ENCODE measurements at regions of chr6 and their contacts with region 1.

Region 1: DNA sequence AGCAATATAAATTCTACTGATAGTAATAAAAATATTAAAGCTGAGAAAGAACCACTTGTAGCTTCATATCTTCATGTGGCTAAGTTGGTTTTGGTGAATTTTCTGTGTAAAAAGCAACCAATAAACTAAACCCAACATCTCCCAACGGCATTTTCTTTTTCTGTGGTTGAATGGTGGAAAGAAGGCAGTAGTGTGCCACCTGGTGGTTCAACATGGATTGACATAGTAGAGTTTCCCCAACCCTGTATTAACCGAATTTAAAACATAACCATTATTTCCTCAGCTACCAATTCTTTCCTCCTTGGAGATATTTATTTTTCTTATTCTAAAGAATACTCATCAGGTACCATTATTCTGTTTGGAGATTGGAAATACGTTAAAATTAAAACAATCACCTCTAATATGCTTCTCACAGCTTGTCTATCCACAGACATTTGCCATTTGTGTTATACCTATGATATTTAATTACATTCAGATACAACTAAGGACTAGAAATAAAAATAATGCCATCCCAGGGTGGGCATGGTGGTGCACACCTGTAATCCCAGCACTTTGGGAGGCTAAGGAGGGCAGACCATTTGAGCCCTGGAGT is 117.1 kb upstream of the EEF1E1 start:
- DNase-seq: peak; percentile 27
- H3K4me3 ChIP-seq: no peak overlapping the region
- H3K27ac ChIP-seq: no peak overlapping the region
- H3K27me3 ChIP-seq: no peaks in the 10 kb centered on the region
- CTCF ChIP-seq: peak; percentile 84

Region 2: DNA sequence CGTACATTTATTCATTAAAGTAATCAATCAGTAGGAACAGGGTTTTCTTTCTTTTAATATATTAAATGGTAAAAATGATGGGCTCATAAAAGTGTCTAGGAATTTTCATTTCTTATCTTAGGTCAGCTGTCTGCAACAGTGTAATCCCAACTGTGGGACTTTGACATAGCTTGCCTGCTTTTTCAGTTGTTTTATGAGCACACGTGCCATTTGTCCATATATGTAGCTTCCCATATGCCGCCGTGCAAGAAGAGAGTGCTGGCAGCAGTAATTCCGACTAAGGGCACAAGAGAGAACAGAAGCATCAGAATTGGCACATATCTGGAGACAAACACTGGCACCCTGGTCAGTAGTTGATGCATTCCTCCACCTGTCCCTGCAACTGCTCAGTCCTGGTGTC is 96.2 kb before region 1 on chr6:
- CTCF ChIA-PET with region 1: interaction called, 945 read pairs
- POLR2A ChIA-PET with region 1: no interaction called
- DNase-seq: no peak
- H3K4me3 ChIP-seq: no peak overlapping the region
- H3K27ac ChIP-seq: no peak overlapping the region
- H3K27me3 ChIP-seq: no peaks in the 10 kb centered on the region
- CTCF ChIP-seq: no peak

Region 3: DNA sequence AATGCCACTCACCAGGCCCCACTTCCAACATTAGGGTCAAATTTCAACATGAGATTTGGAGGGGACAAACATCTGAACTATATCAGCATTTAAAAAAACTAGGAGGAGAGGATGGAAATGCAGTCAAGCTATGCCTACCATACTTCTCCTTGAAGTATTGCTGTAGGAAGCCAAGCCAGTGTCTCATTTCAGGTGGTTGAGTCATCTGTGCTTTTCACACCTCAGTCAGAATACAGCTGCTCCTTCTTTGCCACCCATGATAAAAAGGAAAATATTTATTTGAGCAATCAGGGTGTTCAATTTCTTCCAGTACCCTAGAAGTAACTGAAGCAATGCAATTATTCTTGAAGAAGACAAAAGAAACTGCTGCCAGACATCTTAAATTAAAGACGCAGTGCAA is 70.1 kb before region 1 on chr6:
- CTCF ChIA-PET with region 1: interaction called, 15 read pairs
- POLR2A ChIA-PET with region 1: no interaction called
- DNase-seq: no peak
- H3K4me3 ChIP-seq: no peak overlapping the region
- H3K27ac ChIP-seq: no peak overlapping the region
- H3K27me3 ChIP-seq: peaks cover 2% of the 10 kb centered on the region
- CTCF ChIP-seq: no peak

Region 4: GRCh38 chr6:8180327-8181159 is 38.9 kb before region 1 on chr6:
- CTCF ChIA-PET with region 1: interaction called, 71 read pairs
- POLR2A ChIA-PET with region 1: no interaction called
- DNase-seq: peak; percentile 55
- H3K4me3 ChIP-seq: no peak overlapping the region; the same call in 1 of the 2 replicates
- H3K27ac ChIP-seq: peak overlapping the region; percentile 59
- H3K27me3 ChIP-seq: no peaks in the 10 kb centered on the region
- CTCF ChIP-seq: no peak

Region 5: DNA sequence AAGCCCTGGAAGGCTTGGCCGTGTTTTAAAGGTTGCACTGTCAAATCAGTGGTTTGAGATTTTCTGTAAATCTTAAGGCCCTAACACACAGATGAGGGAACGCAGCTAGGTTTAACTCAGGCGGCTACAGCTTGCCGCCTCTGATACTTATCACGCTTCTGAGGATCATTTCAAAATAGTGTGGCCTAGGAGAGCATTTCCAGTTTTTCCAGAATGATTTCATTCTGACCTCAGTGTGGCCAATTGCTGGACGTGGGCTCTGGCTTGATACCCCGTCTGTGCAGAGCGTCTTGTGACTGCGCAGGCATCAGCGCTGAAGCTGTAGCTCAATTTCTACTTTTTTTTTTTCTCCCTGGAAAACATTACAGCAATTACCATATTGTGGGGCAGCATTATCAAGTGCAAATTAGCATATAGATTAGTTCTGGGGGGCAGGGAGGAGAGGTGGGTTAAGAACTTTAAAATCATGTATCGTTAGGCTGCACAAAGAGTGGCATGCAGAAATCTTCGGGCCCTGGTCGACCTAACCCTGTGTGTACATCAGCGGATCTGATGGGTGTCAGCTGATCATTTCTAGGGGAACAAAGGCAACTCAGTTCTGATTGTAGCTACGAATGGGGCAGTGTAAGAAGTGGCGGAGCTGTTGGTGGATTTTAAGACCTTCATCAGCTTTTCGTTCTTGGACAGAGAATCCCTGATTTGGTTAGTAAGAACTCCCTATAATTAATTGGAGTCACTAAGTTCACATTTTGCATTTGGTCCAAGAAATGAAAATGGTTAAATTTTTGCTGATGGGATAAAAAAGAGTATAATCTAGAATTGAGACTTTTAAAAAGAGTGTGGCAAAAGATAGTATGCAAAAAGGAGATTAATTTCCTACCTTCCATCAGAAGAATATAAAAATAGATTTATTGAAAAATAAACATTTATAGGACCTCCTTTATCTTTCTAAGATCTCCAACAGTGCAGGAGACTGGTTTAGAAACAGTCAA is 12.0 kb before region 1 on chr6:
- CTCF ChIA-PET with region 1: interaction called, 24 read pairs
- POLR2A ChIA-PET with region 1: no interaction called
- DNase-seq: no peak
- H3K4me3 ChIP-seq: no peak overlapping the region
- H3K27ac ChIP-seq: no peak overlapping the region
- H3K27me3 ChIP-seq: no peaks in the 10 kb centered on the region
- CTCF ChIP-seq: no peak

Region 6: GRCh38 chr6:8245726-8246125 is 26.3 kb after region 1 on chr6:
- CTCF ChIA-PET with region 1: interaction called, 15 read pairs
- POLR2A ChIA-PET with region 1: no interaction called
- DNase-seq: no peak
- H3K4me3 ChIP-seq: no peak overlapping the region
- H3K27ac ChIP-seq: no peak overlapping the region
- H3K27me3 ChIP-seq: no peaks in the 10 kb centered on the region
- CTCF ChIP-seq: no peak